Pancreas (tissue), 10 donors: ENCODE measurements at regions of chr3 and their contacts with region 1.

Region 1: DNA sequence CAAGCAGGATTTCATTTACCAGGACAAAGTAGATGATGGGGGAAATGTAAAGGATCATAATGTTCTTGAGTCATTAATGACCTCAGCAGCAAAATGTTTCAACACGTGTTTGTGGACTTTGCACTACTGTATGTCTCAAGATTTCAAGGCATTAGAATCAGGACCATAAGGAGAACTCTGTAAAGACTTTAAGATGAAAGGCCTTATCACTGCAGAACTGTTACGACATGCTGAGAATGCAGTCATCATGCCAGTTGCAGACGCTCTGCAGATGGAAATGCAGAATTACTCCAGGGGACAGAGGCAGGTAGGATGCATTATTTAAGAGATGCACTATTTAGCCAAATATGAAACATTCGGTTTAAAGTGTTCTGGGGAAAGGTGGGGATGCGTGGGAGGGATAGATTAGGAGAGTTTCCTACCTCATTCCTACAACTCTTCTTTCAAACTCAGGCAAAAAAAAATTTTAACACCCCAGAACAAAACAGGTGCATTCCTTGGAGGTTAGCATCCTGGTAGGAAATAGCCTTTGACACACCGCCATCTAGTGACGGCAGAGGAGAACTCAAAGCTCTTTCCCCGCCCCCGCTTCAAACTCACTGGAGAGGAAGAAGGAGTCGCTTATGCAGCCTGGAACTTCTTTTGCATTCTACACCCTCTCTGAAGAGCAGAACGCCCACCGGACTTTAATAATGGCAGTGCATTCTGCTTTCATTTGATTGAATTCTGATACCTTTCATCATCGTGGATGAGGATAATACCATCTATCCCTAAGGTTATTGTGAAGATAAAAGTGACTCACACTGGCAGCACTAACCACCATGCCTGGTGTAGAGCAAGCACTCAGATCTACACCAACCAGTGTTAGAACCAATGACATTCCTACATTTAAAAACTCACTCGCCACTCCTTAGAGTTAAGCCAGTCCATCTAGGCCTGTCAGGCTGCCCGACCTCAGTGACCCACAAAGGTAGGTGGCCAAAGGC is 43.1 kb upstream of the TOPAZ1 start:
- DNase-seq: peak; percentile 32 to 79 (median 58)
- ATAC-seq: peak; percentile 83 to 97 (median 94)
- H3K4me3 ChIP-seq: no peak overlapping the region
- H3K27ac ChIP-seq: no peak overlapping the region
- H3K4me1 ChIP-seq: no peaks in the 10 kb centered on the region
- H3K27me3 ChIP-seq: no peaks in the 10 kb centered on the region
- CTCF ChIP-seq: peak; percentile 60 to 80 (median 68)

Region 2: GRCh38 chr3:43540624-43541023 is 658.0 kb before region 1 on chr3:
- intact Hi-C with region 1: loop called in 1 of 3 experiments (anchors 10 kb)
- DNase-seq: no peak
- ATAC-seq: no peak
- H3K4me3 ChIP-seq: no peak overlapping the region
- H3K27ac ChIP-seq: no peak overlapping the region
- H3K4me1 ChIP-seq: no peaks in the 10 kb centered on the region
- H3K27me3 ChIP-seq: no peaks in the 10 kb centered on the region
- CTCF ChIP-seq: no peak

Region 3: GRCh38 chr3:43855674-43856299 is 342.8 kb before region 1 on chr3:
- intact Hi-C with region 1: loop called in 1 of 3 experiments (anchors 10 kb)
- DNase-seq: peak in 5 of 6 donors; percentile 36 to 69 (median 58)
- ATAC-seq: peak; percentile 61 to 98 (median 86)
- H3K4me3 ChIP-seq: no peak overlapping the region
- H3K27ac ChIP-seq: no peak overlapping the region
- H3K4me1 ChIP-seq: no peaks in the 10 kb centered on the region
- H3K27me3 ChIP-seq: no peaks in the 10 kb centered on the region
- CTCF ChIP-seq: peak in 3 of 4 donors; percentile 39 to 72 (median 54)

Region 4: GRCh38 chr3:44252332-44252959 is 53.9 kb after region 1 on chr3:
- intact Hi-C with region 1: no loop called
- DNase-seq: no peak
- ATAC-seq: peak in 2 of 4 donors; percentile 41 to 45
- H3K4me3 ChIP-seq: no peak overlapping the region
- H3K27ac ChIP-seq: no peak overlapping the region
- H3K4me1 ChIP-seq: no peaks in the 10 kb centered on the region
- H3K27me3 ChIP-seq: no peaks in the 10 kb centered on the region
- CTCF ChIP-seq: no peak